ENCODE measurements at regions of chr13 and their contacts with region 1.

Region 1: DNA sequence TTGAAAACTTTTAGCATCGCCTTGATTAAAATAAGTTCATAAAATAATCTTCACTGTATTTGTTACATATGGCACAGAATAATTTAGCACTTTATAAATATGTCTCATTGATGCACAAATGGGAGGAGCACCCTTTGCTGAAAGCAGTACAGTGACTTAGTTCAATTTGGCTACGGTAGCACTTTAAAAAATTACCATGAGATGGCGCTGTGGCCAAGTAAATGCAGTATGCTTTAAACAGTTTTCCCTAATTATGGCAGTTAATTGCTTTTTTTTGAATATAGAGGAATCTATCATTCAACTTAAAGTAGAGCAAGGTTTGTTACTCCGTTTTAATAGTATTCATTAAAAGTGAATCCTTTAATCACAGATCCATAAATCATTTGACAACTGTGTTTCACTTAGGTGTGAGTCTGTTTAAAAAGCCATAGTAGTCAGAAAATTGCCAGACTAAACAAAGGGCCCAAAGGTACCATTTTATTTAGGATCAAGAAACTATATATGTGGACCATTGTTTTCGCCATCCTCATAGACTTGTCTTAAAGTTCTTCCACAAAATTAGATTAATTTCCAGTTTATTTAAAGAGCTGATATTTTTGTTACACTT is 34.7 kb upstream of the ESD start:
- DNase-seq: peak; percentile 79
- H3K4me3 Mint-ChIP-seq: no peak overlapping the region
- H3K27ac Mint-ChIP-seq: no peak overlapping the region
- H3K4me1 Mint-ChIP-seq: no peaks in the 10 kb centered on the region
- H3K27me3 Mint-ChIP-seq: peaks cover 17% of the 10 kb centered on the region

Region 2: DNA sequence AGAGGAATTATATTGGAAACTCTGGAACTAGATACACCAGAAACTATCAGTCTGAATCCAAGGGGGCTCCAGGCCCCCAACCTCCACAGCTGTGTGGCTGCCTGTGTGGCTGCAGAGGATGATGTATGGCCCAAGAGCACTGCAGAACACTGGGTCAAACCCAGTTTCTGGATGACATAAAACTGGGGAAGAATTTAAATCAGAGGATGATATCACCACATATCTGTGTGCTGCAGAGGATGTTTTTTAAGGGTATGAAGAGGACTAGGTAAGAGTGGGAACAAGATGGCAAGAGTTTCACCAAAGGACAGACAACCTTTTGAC is 942.9 kb after region 1 on chr13:
- intact Hi-C with region 1: loop called (anchors 1 kb)
- DNase-seq: no peak
- H3K4me3 Mint-ChIP-seq: no peak overlapping the region
- H3K27ac Mint-ChIP-seq: no peak overlapping the region
- H3K4me1 Mint-ChIP-seq: peaks cover 2% of the 10 kb centered on the region
- H3K27me3 Mint-ChIP-seq: peaks cover 4% of the 10 kb centered on the region

Measured in activated CD4-positive, alpha-beta T cell treated with anti-CD3 and anti-CD28 coated beads, Interleukin-2, amount 10 ng/mL, durations not matched to agents 24 days and 14 days (primary cell).